Adrenal gland (tissue), 19 donors: ENCODE measurements at regions of chr3 and their contacts with region 1.

Region 1: GRCh38 chr3:49445381-49445780 is 16.3 kb upstream of the NICN1 start:
- DNase-seq: no peak
- H3K4me3 ChIP-seq: no peak overlapping the region
- H3K27ac ChIP-seq: peak overlapping the region in 1 of 5 donors; percentile 34
- H3K4me1 ChIP-seq: peaks cover 0 to 9% of the 10 kb centered on the region in 2 donors
- H3K27me3 ChIP-seq: no peaks in the 10 kb centered on the region
- CTCF ChIP-seq: no peak
- POLR2A ChIP-seq: no peak

Region 2: GRCh38 chr3:48151058-48151806 is 1294.1 kb before region 1 on chr3:
- intact Hi-C with region 1: no loop called
- DNase-seq: peak; percentile 70 to 92 (median 86)
- H3K4me3 ChIP-seq: no peak overlapping the region
- H3K27ac ChIP-seq: peak overlapping the region in 2 of 5 donors; percentile 54 to 65
- H3K4me1 ChIP-seq: peaks cover 0 to 8% of the 10 kb centered on the region in 2 donors
- H3K27me3 ChIP-seq: no peaks in the 10 kb centered on the region
- CTCF ChIP-seq: peak; percentile 62 to 91 (median 84)
- POLR2A ChIP-seq: no peak

Region 3: DNA sequence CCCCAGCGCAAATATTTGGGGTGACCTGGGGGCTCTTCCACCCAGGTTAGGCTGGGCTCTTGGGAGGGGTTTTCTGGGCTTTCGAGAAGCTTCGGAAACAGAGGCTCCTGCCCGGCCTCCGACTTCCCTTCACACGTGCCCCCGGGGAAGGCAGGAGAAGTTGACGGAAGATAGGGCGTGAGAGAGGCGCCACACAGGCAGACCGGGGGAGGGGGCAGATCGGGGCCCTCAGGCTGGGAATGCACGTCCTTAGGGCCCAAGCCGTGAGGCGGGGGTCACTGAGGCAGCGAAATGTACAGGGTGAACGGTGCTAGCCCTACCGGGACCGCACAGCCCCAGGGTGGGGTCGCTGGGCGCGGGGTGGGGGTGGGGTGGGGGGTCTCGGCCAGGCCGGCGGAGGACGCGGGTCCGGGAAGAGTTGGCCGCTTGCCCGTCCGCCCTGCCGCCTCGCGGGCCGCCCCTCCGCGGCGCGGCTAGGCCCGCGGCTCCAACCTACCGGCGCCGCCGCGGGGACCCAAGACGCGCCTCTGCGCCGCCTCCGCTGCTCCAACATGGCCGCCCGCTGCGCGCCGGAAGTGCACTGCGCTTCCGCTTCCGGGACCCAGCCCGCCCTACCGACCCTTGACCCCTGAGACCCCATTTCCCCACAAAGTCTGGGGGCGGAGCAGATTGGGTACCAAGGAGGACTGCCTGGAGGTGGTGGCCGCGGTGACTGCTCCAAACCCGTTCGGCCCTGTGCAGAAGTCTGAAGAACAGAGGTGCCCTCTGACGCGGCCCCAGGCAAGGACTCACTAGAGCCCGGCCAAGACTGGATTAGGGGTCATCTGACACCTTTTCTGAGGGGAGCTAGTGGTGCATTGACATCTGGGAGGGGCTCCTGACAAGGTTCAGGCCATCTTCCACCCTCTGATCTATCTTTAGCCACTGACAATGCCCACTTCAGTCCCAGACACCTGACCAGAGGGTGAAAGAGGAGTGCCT is 279.3 kb before region 1 on chr3 and contains the start of gene CCDC71:
- intact Hi-C with region 1: loop called in 1 of 2 experiments (anchors 5 kb)
- DNase-seq: peak; percentile 67 to 82 (median 74)
- H3K4me3 ChIP-seq: peak within 1 kb of the TSS in 3 of 4 donors; percentile 61 to 95 (median 85)
- H3K27ac ChIP-seq: peak within 1 kb of the TSS in 4 of 5 donors; percentile 34 to 99 (median 89)
- H3K4me1 ChIP-seq: peaks cover 26 to 40% of the 10 kb centered on the region in 2 donors
- H3K27me3 ChIP-seq: no peaks in the 10 kb centered on the region
- CTCF ChIP-seq: no peak
- POLR2A ChIP-seq: peak in 1 of 2 donors; percentile 35
- total RNA-seq, gene CCDC71: 23.5 to 46.4 (median 32.2) TPM

Region 4: GRCh38 chr3:49327485-49327884 is 117.9 kb before region 1 on chr3:
- intact Hi-C with region 1: loop called (anchors 10 kb)
- DNase-seq: no peak
- H3K4me3 ChIP-seq: no peak overlapping the region
- H3K27ac ChIP-seq: no peak overlapping the region
- H3K4me1 ChIP-seq: no peaks in the 10 kb centered on the region
- H3K27me3 ChIP-seq: no peaks in the 10 kb centered on the region
- CTCF ChIP-seq: peak in 3 of 6 experiments; percentile 5 to 9 (median 6)
- POLR2A ChIP-seq: no peak

Region 5: DNA sequence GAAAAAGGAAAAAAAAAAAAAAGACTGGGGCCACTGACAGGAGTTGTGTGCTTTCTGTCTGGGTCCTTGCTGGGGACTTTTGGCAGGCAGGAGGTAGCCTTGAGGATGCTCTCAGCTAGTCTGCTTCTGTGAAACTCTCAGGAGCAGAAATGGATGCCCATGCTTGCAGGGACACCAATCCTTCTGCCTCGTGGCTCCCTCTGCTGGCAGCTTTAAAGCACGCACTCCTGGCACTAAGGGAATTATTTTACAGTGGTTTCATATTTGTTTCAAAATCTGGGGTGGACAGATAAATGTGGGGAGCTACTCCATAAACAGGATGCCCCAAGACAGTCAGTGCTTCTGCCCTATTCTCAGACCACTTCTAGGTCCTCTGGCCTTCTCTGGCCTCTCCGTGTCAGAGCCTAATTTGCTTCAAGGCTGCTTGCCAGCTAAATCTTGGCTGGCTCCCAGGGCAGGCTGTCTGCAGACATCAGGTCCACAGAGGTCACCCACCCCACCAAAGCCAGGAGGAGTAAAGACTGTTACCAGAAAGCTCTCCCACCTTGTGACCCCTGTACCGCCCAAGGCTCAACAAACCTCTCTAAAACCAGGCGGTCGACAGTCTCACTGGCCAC is 393.9 kb after region 1 on chr3:
- intact Hi-C with region 1: no loop called
- DNase-seq: peak; percentile 80 to 94 (median 84)
- H3K4me3 ChIP-seq: no peak overlapping the region
- H3K27ac ChIP-seq: peak overlapping the region in 1 of 5 donors; percentile 19
- H3K4me1 ChIP-seq: peaks cover 0 to 5% of the 10 kb centered on the region in 2 donors
- H3K27me3 ChIP-seq: no peaks in the 10 kb centered on the region
- CTCF ChIP-seq: peak; percentile 86 to 95 (median 91)
- POLR2A ChIP-seq: no peak